AG04450 (cell line): ENCODE measurements at regions of chr7 and their contacts with region 1.

Region 1: DNA sequence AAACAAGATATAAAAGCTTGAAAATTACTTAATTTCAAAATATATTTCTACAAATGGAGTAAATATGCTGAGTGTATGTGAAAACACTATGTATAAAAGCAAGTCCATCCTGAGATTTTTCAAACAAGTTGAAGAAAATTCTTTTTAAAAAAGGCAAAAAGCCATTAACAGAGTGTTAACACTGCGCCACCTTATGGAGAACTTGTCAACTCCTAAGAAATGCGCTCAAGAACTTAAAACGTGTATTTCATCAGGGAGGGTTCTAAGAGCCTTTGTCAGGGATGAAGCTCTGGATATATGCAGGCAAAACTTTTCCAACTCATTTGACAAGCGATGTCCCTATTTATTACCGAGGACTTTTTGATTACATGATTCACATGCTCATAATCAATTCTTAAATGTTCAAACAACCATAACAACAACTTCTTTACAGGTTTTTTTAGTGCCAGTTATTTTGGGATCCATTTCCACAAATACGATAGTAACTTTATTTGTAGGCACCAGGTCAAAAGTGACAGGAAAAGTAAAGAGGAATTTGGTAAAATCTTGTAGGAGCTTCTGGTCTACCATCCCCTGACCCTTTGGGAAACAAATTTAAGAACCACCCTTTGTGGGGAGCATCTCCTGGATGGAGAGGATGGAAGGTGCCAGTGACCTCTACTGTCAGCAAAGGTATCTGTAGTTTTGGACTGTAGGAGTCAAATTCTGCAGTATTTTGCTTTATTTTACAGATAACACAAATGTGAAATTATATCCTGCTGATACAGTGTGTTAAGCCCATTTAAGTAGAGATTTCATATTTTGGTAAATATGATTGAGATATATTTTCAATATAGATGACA is 23.2 kb downstream of the CALCR start:
- DNase-seq: peak; percentile 18
- H3K4me3 ChIP-seq: no peak overlapping the region
- H3K27ac ChIP-seq: no peak overlapping the region
- H3K27me3 ChIP-seq: no peaks in the 10 kb centered on the region
- CTCF ChIP-seq: peak; percentile 65

Region 2: GRCh38 chr7:94217766-94218165 is 666.5 kb after region 1 on chr7:
- CTCF ChIA-PET with region 1: interaction called, 10 read pairs
- POLR2A ChIA-PET with region 1: no interaction called
- DNase-seq: no peak
- H3K4me3 ChIP-seq: no peak overlapping the region
- H3K27ac ChIP-seq: no peak overlapping the region
- H3K27me3 ChIP-seq: no peaks in the 10 kb centered on the region
- CTCF ChIP-seq: no peak